Adrenal gland (tissue), 19 donors: ENCODE measurements at regions of chr1 and their contacts with region 1.

Region 1: GRCh38 chr1:110106013-110106941 is 6.0 kb upstream of the UBL4B start:
- DNase-seq: peak; percentile 67 to 90 (median 78)
- H3K4me3 ChIP-seq: no peak overlapping the region
- H3K27ac ChIP-seq: no peak overlapping the region
- H3K4me1 ChIP-seq: no peaks in the 10 kb centered on the region
- H3K27me3 ChIP-seq: no peaks in the 10 kb centered on the region
- CTCF ChIP-seq: peak; percentile 80 to 93 (median 91)
- POLR2A ChIP-seq: peak in 1 of 2 donors; percentile 8

Region 2: DNA sequence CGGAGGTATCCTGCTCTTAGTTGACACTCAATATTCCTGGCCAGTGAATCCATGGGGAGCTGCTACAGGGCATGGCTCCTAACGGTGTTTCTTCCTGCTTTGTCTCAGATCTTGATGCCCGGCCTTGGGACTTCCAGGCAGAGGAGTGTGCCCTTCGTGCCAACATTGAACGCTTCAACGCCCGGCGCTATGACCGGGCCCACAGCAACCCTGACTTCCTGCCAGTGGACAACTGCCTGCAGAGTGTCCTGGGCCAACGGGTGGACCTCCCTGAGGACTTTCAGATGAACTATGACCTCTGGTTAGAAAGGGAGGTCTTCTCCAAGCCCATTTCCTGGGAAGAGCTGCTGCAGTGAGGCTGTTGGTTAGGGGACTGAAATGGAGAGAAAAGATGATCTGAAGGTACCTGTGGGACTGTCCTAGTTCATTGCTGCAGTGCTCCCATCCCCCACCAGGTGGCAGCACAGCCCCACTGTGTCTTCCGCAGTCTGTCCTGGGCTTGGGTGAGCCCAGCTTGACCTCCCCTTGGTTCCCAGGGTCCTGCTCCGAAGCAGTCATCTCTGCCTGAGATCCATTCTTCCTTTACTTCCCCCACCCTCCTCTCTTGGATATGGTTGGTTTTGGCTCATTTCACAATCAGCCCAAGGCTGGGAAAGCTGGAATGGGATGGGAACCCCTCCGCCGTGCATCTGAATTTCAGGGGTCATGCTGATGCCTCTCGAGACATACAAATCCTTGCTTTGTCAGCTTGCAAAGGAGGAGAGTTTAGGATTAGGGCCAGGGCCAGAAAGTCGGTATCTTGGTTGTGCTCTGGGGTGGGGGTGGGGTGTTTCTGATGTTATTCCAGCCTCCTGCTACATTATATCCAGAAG is 52.5 kb before region 1 on chr1:
- intact Hi-C with region 1: loop called (anchors 5 kb)
- DNase-seq: peak; percentile 60 to 91 (median 77)
- H3K4me3 ChIP-seq: no peak overlapping the region
- H3K27ac ChIP-seq: no peak overlapping the region
- H3K4me1 ChIP-seq: peaks cover 18 to 56% of the 10 kb centered on the region in 2 donors
- H3K27me3 ChIP-seq: no peaks in the 10 kb centered on the region
- CTCF ChIP-seq: peak; percentile 91 to 97 (median 94)
- POLR2A ChIP-seq: no peak

Region 3: DNA sequence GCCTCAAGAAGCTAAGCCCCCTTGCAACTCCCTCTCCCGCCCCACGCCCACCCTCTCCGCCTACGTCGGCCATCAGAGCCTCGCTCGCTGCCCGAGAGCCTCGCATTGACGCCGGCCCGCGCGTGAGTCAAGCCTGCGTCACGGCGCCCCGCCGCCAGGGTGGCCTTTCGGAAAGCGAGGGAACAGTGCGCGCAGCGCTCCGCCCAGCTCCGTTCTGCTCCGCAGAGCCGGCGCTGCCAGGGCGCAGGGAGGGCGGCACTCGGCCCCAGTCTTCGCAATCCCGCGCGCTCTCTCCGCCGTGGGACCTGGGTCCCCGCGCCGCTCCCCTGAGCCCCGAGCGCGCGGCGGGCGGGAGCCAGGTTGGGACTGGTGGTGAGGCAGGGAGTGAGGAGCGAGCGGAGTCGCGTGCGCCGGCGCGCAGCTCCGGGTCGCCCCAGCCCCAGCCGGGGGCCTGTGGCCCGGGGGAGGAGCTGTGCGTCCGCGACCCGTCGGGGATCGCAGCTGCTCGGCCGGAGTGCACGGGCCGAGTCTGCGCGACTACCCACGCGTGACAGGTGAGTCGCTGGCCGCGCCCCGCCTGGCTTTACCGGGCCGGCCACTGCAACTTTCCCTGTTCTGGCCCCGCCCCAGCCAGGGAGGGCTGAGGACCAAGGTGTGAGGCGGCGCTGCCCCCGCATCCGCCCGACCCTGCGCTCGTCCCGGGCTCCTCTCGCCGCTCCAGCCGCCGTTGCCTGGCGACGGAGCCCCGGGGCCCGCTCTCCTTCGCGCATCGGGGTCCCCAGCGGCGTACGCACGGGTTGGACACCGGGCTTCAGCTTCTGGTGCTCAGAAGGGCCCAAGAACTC is 44.3 kb after region 1 on chr1 and contains the start of gene SLC6A17:
- intact Hi-C with region 1: loop called in 1 of 2 experiments (anchors 5 kb)
- DNase-seq: peak; percentile 34 to 86 (median 55)
- H3K4me3 ChIP-seq: peak within 1 kb of the TSS in 1 of 4 donors; percentile 27
- H3K27ac ChIP-seq: peak within 1 kb of the TSS in 1 of 5 donors; percentile 81
- H3K4me1 ChIP-seq: peaks cover 6 to 11% of the 10 kb centered on the region in 2 donors
- H3K27me3 ChIP-seq: peaks cover 52% of the 10 kb centered on the region
- CTCF ChIP-seq: peak in 2 of 6 experiments; percentile 17 to 33
- POLR2A ChIP-seq: peak; percentile 25 to 84
- total RNA-seq, gene SLC6A17: 0.04 to 6.9 (median 0.45) TPM in 8 of 9 donors, not detected in the other

Region 4: DNA sequence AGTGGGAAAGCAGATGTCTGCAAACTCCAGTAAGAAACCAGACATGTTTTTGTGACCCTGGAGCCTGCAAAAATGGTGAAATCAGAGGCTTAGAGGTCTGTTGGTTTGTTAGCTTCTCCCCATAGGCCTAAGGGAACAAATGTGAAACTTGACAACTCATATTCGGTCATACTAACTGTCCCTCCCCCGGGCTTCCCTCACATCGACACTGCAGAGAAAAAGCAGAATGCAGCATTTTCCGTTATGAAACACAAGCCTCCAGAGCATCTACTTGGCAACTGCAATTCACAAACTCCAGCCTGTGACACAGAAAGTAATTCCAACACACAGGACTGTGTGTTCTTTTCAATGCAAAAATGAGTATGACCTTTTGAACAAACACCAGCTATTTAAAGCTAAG is 496.2 kb after region 1 on chr1:
- intact Hi-C with region 1: no loop called
- DNase-seq: peak in 1 of 7 donors; percentile 27
- H3K4me3 ChIP-seq: no peak overlapping the region
- H3K27ac ChIP-seq: no peak overlapping the region
- H3K4me1 ChIP-seq: peaks cover 7 to 14% of the 10 kb centered on the region in 2 donors
- H3K27me3 ChIP-seq: peaks cover 32% of the 10 kb centered on the region
- CTCF ChIP-seq: no peak
- POLR2A ChIP-seq: no peak